ENCODE measurements at regions of chr10 and their contacts with region 1.

Region 1: DNA sequence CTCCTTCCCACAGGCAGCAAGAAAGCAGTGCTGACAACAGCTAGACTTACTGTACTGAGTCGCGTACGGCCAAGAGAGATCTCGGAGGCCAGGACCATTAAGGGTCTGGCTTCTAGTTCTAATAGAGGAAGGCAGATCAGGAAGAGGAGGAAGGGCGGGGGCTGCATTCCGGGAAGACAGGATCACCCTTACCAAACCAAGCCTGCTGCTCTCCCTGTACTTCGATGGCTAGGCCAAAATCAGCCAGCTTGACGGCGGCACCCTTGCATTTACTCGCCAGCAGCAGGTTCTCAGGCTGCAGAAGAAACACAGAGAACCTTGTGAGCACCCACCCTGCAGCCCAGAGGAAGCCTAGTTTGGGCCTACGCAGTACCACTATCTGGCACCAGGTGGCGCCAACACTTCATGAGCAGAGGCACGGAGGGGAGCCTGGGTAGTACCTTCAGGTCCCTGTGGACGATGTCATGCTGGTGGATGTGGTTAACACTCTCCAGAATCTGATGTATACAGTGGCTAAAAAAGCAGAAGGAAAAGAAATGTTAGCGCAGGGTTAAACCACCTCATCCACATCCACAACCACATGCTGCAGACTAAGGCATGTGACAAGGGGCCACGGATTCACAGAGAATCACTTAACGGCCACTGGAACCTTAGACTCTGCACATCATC is 25.4 kb downstream of the CAMK2G start:
- H3K4me3 ChIP-seq: no peak overlapping the region
- H3K27ac ChIP-seq: no peak overlapping the region
- H3K4me1 ChIP-seq: no peaks in the 10 kb centered on the region
- CTCF ChIP-seq: peak; percentile 94

Region 2: DNA sequence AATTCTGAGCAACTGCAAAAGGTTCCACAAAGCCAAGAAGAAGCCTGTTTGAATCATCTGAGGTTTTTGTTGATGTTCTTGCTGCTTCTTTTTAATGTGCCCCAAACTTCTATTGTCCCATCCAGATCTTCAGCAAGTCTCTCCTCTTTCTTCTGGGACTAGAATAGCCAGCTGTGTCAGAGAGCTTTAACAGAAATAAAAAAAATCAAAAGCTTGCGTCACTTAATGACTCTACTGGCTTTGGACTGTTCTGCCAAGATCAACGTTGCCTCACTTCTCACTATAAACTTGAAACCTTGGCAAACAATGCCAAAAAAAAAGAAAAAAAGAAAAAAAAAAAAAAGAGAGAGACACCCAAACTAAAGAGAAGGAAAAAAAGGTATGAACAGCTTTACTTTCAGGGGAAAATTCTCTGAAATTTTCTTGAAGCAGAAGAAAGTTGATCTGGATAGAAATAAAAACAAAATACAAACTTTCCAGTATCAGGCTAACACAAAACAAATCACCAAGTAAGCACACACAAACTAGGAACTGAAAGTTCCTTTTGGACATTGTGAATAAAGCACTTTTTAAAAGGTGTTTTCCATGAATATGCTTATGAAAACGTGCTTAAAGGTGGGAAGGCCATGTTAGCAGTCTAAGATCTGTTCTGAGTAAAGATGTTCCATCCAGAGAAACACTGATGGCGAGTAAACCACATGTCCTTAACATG is 272.6 kb before region 1 on chr10:
- CTCF ChIA-PET with region 1: no interaction called
- POLR2A ChIA-PET with region 1: no interaction called
- H3K4me3 ChIP-seq: no peak overlapping the region
- H3K27ac ChIP-seq: no peak overlapping the region
- H3K4me1 ChIP-seq: 0 out of 2 replicates have a peak, but pooled peaks cover 3% of the 10 kb centered on the region
- CTCF ChIP-seq: no peak

Region 3: DNA sequence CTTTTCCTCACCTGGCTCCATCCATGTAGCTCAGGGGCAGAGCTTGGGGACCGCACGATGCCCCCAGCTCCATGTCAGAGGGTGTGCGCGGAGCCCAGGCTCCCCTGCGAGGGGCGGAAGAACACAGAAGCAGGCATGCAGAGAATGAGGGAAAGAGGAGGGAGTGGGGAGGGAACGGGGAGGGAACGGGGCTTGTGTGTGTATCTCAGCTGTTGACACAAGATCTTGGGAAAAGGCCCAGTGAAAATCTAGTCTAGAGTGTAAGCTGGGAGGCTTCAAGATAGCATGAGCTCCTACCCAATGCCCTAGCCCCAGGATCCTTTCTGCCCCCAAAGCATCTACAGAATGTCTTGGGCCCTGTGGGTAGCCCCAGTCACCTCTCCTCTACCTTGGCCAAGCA is 12.5 kb before region 1 on chr10:
- CTCF ChIA-PET with region 1: interaction called, 14 read pairs
- POLR2A ChIA-PET with region 1: no interaction called
- H3K4me3 ChIP-seq: no peak overlapping the region
- H3K27ac ChIP-seq: no peak overlapping the region
- H3K4me1 ChIP-seq: no peaks in the 10 kb centered on the region
- CTCF ChIP-seq: no peak

Measured in HEK293 (cell line).